Endothelial cell of umbilical vein (primary cell): ENCODE measurements at regions of chr17 and their contacts with region 1.

Region 1: DNA sequence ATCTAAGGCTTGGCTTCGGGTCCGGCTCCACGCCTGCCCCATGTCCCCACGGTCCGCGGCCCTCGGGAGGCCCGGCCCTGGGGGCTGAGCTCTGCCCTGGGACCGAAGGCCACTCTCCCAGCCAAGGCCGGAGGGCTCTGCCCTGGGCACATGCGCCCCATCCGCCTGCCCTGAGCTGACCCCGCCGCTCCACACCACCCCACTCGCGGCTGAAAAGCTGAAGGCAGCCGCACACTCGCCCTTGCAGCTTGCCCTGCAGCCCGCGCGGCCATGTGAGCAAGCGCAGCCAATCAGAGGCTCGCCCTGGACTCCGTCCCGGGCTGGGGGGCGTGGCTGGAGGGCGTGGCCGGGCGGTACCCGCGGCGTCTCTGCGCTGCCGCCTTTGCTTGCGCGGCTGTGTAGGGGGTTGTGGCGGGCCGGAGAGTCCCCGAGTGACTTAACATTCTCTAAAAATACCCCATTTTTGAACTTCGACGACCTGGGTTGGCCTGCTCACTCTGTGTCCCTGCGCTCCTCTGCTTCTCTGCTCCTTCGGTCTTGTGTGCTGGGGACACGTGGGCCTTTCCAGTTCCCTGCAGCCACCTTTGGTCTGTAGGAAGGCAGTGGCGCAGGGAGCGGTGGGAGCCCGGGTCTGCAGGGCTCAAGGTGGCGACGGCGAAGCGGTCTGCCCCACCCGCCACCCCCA is 8.8 kb upstream of the MAP2K3 start:
- DNase-seq: peak; percentile 81
- H3K4me3 ChIP-seq: peak overlapping the region; percentile 5 to 56 (median 39)
- H3K27ac ChIP-seq: no peak overlapping the region
- H3K4me1 ChIP-seq: peaks cover 11% of the 10 kb centered on the region
- H3K27me3 ChIP-seq: no peaks in the 10 kb centered on the region
- CTCF ChIP-seq: no peak
- POLR2A ChIP-seq: peak; percentile 76

Region 2: GRCh38 chr17:21119247-21119918 is 156.3 kb before region 1 on chr17:
- CTCF ChIA-PET with region 1: interaction called, 14 read pairs
- POLR2A ChIA-PET with region 1: no interaction called
- dilution Hi-C with region 1: no loop called
- intact Hi-C with region 1: no loop called
- DNase-seq: peak; percentile 61
- H3K4me3 ChIP-seq: peak overlapping the region in 1 of 3 experiments; percentile 9
- H3K27ac ChIP-seq: no peak overlapping the region
- H3K4me1 ChIP-seq: peaks cover 4% of the 10 kb centered on the region
- H3K27me3 ChIP-seq: peaks cover 0 to 2% of the 10 kb centered on the region in 2 experiments
- CTCF ChIP-seq: peak; percentile 81 to 86
- POLR2A ChIP-seq: no peak

Region 3: DNA sequence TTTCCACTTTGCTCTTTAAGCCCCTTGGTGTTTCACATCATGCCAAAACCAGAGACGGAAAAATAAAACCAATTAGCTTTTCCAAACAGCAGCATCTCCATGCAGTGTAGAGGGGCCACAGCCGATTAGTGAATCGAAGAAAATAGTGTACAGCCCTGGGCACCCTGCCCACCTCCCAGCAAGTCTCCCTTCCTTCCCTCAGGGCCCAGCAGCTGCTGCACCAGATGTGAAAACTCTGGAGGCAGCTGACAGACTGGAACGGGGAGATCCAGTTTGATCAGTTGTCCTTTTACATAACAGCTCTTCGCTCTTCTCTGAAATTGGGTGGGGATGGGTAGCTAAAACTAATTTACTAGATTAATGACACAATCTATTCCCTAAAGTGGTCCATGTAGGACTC is 81.0 kb before region 1 on chr17:
- CTCF ChIA-PET with region 1: no interaction called
- POLR2A ChIA-PET with region 1: no interaction called
- dilution Hi-C with region 1: no loop called
- intact Hi-C with region 1: no loop called
- DNase-seq: no peak
- H3K4me3 ChIP-seq: no peak overlapping the region
- H3K27ac ChIP-seq: no peak overlapping the region
- H3K4me1 ChIP-seq: no peaks in the 10 kb centered on the region
- H3K27me3 ChIP-seq: no peaks in the 10 kb centered on the region
- CTCF ChIP-seq: no peak
- POLR2A ChIP-seq: no peak

Region 4: DNA sequence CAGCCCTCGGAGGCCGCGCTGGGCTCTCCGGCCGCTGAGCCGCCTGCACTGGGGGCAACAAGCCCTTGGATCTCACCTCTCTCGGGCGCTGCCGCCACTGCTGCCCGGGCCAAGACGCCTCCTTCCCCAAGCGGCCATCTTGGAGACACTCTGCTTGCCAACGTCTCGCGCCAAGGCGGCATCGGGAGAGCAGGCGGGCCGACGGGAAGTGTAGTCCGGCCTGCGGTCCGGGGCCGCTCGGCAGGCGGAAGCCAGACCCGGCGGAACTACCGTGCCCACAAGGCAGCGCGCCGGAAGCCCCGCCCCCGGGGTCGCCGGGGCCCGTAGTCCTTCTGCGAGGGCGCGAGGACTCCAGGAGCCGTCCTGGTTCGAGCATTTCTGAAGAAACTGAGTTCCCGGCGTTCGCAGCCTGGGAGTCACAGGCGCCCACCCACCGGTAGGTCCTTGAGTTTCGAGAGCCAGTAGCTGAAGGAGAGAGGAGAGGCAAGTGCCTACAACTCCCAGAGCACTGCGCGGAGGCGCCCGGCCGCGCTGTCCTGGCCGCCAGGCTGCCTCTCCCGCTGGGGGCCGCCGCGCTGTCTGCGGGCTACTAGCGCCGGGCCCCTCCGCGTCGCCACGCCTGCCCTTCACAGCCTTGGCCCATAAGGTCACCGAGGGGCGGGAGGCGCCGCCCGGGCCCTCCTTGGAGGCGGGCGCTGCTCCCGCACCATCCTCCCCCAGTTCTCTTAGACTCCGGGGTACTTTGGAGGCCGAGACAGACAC is 61.5 kb before region 1 on chr17 and contains the start of gene TMEM11:
- CTCF ChIA-PET with region 1: interaction called, 4 read pairs
- POLR2A ChIA-PET with region 1: no interaction called
- dilution Hi-C with region 1: no loop called
- intact Hi-C with region 1: loop called (anchors 2 kb)
- DNase-seq: peak; percentile 97
- H3K4me3 ChIP-seq: peak within 1 kb of the TSS; percentile 73 to 96 (median 96)
- H3K27ac ChIP-seq: peak within 1 kb of the TSS; percentile 77
- H3K4me1 ChIP-seq: peaks cover 20% of the 10 kb centered on the region
- H3K27me3 ChIP-seq: no peaks in the 10 kb centered on the region
- CTCF ChIP-seq: peak in 1 of 2 donors; percentile 5
- POLR2A ChIP-seq: peak; percentile 58
- total RNA-seq, gene TMEM11: 27.4 and 28.8 TPM in 2 replicates

Region 5: DNA sequence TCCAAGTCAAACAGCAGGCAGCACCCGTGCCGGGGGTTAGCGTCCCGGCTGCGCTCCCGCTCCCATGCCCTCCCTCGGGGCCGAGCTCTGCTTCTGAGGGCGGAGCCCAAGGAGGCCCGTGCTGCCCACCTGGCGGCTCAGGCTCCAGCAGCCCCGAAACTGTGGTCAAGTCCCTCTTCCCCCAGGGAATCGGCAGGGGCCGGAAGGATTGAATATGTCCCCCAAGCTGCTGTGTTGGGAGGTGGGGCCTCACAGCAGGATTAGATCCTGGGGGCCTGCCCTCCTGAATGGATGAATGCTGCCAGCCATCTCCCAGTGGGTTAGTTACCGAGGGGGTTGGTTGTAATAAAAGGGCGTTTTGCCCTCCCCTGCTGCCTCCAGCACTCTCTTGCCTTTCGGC is 42.7 kb after region 1 on chr17:
- CTCF ChIA-PET with region 1: interaction called, 4 read pairs
- POLR2A ChIA-PET with region 1: no interaction called
- dilution Hi-C with region 1: no loop called
- intact Hi-C with region 1: loop called (anchors 1 kb)
- DNase-seq: no peak
- H3K4me3 ChIP-seq: no peak overlapping the region
- H3K27ac ChIP-seq: no peak overlapping the region
- H3K4me1 ChIP-seq: no peaks in the 10 kb centered on the region
- H3K27me3 ChIP-seq: peaks cover 0 to under 1% of the 10 kb centered on the region in 2 experiments
- CTCF ChIP-seq: no peak
- POLR2A ChIP-seq: no peak

Region 6: GRCh38 chr17:21376759-21377690 is 101.3 kb after region 1 on chr17:
- CTCF ChIA-PET with region 1: no interaction called
- POLR2A ChIA-PET with region 1: no interaction called
- dilution Hi-C with region 1: no loop called
- intact Hi-C with region 1: loop called (anchors 2 kb)
- DNase-seq: peak; percentile 10
- H3K4me3 ChIP-seq: peak overlapping the region; percentile 11 to 31 (median 21)
- H3K27ac ChIP-seq: no peak overlapping the region
- H3K4me1 ChIP-seq: peaks cover 6% of the 10 kb centered on the region
- H3K27me3 ChIP-seq: peaks cover 6% of the 10 kb centered on the region in 2 experiments
- CTCF ChIP-seq: no peak
- POLR2A ChIP-seq: no peak

Region 7: GRCh38 chr17:21457051-21458026 is 181.6 kb after region 1 on chr17:
- CTCF ChIA-PET with region 1: interaction called, 16 read pairs
- POLR2A ChIA-PET with region 1: no interaction called
- dilution Hi-C with region 1: no loop called
- intact Hi-C with region 1: loop called (anchors 1 kb)
- DNase-seq: peak; percentile 86
- H3K4me3 ChIP-seq: no peak overlapping the region
- H3K27ac ChIP-seq: no peak overlapping the region
- H3K4me1 ChIP-seq: peaks cover 4% of the 10 kb centered on the region
- H3K27me3 ChIP-seq: no peaks in the 10 kb centered on the region
- CTCF ChIP-seq: peak; percentile 73 to 93
- POLR2A ChIP-seq: no peak

Region 8: GRCh38 chr17:21524211-21524591 is 248.5 kb after region 1 on chr17:
- CTCF ChIA-PET with region 1: no interaction called
- POLR2A ChIA-PET with region 1: no interaction called
- dilution Hi-C with region 1: no loop called
- intact Hi-C with region 1: no loop called
- DNase-seq: no peak
- H3K4me3 ChIP-seq: no peak overlapping the region
- H3K27ac ChIP-seq: no peak overlapping the region
- H3K4me1 ChIP-seq: no peaks in the 10 kb centered on the region
- H3K27me3 ChIP-seq: no peaks in the 10 kb centered on the region
- CTCF ChIP-seq: no peak
- POLR2A ChIP-seq: no peak